HCT116 (cell line): ENCODE measurements at regions of chr16 and their contacts with region 1.

Region 1: DNA sequence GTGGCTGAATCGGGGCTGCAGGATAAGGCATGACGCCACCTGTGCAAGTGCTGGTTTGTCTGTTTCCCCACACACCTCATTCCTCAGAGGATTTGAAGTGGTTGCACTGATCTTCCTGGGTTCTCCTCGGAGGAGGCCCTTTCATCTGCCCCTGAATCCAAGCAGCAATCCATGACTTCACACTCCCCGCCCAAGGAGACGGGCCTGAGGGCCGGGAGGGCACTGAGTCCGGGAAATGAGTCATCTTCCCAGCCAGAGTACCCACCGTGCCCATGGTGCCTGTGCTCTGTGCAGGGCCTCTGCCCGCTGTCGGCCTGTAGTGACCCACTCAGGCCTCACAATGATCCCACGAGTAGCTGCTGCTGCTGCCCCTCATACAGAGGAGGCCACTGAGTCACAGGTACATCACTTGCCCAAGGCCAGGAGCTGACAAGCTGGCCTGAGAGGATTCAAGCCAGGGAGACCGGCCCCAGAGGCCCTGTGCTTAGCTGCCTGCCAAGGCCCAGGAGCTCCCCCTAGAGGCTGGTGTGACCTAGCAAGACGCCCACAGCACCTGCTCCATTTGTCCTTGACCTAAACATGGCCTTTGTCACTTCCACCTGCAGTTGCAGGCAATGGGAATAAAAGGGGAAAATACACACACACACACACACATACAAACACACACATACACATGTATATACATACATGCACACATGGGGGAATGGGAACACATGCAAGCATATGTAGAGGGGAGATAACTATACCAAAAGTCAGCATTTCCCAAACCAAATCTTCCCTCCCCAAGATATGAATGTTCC is 240.0 kb downstream of the C16orf95 start:
- DNase-seq: peak; percentile 94
- ATAC-seq: peak; percentile 97
- H3K4me3 ChIP-seq: peak overlapping the region; percentile 27 to 42
- H3K27ac ChIP-seq: peak overlapping the region; percentile 40
- H3K4me1 ChIP-seq: peaks cover 7 to 14% of the 10 kb centered on the region in 2 experiments; a peak in 3 of 4 replicates
- H3K27me3 ChIP-seq: no peaks in the 10 kb centered on the region
- CTCF ChIP-seq: peak; percentile 86 to 100 (median 99)
- POLR2A ChIP-seq: no peak
- RAD21 ChIP-seq: peak; percentile 91

Region 2: DNA sequence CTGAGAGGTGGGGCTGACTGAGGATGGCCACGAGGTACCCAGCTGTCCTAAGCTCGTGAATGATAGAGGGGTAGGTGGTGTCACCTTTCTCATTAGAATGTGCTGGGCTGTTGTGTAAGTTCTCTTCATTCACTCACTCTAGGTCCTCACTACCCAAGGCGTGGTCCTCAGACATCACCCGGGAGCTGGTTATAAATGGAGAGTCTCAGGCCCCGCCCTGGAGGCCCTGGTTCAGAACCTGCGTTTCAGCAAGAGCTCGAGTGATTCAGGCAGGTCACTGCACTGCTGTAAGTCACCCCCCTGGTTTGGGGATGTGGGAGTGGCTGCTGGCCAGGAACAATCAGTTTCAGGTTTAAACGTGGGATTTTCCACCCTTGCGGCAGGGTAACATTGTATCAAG is 359.0 kb before region 1 on chr16:
- CTCF ChIA-PET with region 1: no interaction called
- POLR2A ChIA-PET with region 1: no interaction called
- RAD21 ChIA-PET with region 1: no interaction called
- intact Hi-C with region 1: no loop called
- DNase-seq: no peak
- ATAC-seq: no peak
- H3K4me3 ChIP-seq: no peak overlapping the region
- H3K27ac ChIP-seq: no peak overlapping the region
- H3K4me1 ChIP-seq: no peaks in the 10 kb centered on the region; a peak in 1 of 4 replicates
- H3K27me3 ChIP-seq: peaks cover 21% of the 10 kb centered on the region; the same call in 1 of the 2 replicates
- CTCF ChIP-seq: no peak
- POLR2A ChIP-seq: no peak
- RAD21 ChIP-seq: no peak

Region 3: GRCh38 chr16:86761111-86762031 is 315.8 kb before region 1 on chr16:
- CTCF ChIA-PET with region 1: no interaction called
- POLR2A ChIA-PET with region 1: no interaction called
- RAD21 ChIA-PET with region 1: no interaction called
- intact Hi-C with region 1: loop called (anchors 5 kb)
- DNase-seq: peak; percentile 51
- ATAC-seq: peak; percentile 92
- H3K4me3 ChIP-seq: no peak overlapping the region
- H3K27ac ChIP-seq: no peak overlapping the region
- H3K4me1 ChIP-seq: peaks cover 0 to 4% of the 10 kb centered on the region in 2 experiments; a peak in 3 of 4 replicates
- H3K27me3 ChIP-seq: peaks cover 37% of the 10 kb centered on the region
- CTCF ChIP-seq: peak; percentile 79 to 99 (median 97)
- POLR2A ChIP-seq: no peak
- RAD21 ChIP-seq: peak; percentile 77